CD4-positive, alpha-beta T cell (primary cell): ENCODE measurements at regions of chr9 and their contacts with region 1.

Region 1: DNA sequence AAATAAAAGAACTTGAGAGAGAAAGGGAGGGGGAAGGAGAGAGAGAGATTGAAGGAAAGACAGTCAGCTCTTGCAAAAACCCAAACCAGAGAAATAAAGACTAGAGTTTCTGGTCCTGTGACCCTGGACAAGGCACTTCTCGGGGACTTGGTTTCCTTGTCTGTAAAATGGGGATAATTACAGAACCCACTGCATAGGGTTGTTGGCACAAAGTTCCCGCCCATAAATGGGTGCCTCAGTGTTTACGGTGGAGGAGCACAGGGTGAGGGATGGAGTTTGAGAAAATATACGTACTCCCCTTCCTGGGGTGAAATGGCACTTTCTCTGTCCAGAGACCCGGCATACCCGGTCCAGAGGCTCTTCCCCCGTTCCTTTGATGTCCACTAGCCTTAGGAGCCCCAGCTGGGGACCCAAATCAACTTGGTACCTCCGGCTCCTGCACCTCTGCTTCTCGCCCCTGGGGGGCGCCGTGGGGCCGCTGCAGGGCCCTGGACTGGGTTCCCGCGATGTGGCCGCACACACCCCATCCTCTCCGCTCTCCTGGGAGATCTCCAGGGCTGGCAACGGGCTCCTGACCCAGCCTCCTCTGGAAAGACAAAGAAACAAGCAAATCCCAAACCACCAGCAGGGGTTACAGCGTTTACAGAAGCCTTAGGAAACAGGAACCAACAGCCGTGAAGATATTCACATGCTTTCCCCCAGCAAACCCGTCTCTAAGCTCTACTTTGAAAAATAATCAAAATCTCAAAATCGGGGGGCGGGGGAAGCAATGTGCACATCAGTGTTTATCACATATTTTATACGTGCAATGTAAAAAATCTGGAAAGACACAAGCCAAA is 26.3 kb downstream of the PTGES start:
- DNase-seq: peak; percentile 31 to 77 (median 48)
- ATAC-seq: peak; percentile 94
- H3K4me3 ChIP-seq: no peak overlapping the region
- H3K4me3 Mint-ChIP-seq: no peak overlapping the region
- H3K27ac ChIP-seq: no peak overlapping the region
- H3K27ac Mint-ChIP-seq: no peak overlapping the region
- H3K4me1 ChIP-seq: peaks cover 7% of the 10 kb centered on the region
- H3K4me1 Mint-ChIP-seq: peaks cover 4% of the 10 kb centered on the region
- H3K27me3 ChIP-seq: peaks cover 0 to 7% of the 10 kb centered on the region in 2 experiments
- H3K27me3 Mint-ChIP-seq: peaks cover 8% of the 10 kb centered on the region
- CTCF ChIP-seq: peak; percentile 76

Region 2: DNA sequence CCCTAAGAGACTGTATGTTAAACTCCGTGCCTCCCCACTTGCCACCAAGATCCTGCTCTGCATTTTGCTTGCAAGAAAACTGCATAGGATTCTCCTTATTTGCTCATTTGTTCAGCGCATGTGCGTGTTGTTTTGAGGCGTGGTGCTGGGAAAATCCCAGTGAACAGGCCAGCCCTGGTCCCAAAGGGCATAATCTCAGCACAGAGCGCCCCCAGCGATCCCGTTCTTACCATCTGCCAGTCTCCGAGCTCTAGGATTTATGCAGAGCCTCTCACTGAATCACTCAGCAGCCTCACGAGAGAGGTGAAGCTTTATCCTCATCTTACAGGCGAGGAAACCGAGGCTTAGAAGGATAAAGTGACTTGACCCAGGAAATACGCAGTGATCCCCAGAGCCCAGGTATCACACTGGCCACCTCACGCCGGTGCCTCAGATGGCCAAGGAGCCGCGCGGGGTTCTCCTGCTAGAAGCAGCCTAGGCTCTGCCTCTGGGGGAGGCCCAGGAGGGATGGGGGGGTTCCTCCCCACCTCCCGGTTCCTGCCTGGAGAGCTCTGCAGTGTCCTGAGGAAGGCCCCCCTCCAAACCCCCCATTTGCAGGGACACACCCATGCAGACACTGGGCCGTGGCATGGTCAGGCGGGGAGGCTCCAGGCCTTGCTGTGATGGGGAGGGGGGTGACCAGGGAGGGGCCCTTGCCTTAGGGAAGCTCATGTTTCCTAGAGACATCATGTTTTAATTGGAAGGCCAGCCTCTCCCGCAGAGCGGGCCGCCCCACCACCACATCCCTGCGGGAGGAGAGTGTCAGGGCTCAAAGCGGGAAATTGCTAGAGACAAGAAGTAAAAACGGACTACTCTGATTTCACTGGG is 49.3 kb before region 1 on chr9:
- CTCF ChIA-PET with region 1: no interaction called
- POLR2A ChIA-PET with region 1: no interaction called
- intact Hi-C with region 1: no loop called
- DNase-seq: no peak
- ATAC-seq: no peak
- H3K4me3 ChIP-seq: no peak overlapping the region
- H3K4me3 Mint-ChIP-seq: no peak overlapping the region
- H3K27ac ChIP-seq: no peak overlapping the region
- H3K27ac Mint-ChIP-seq: no peak overlapping the region
- H3K4me1 ChIP-seq: no peaks in the 10 kb centered on the region
- H3K4me1 Mint-ChIP-seq: no peaks in the 10 kb centered on the region
- H3K27me3 ChIP-seq: peaks cover 0 to 10% of the 10 kb centered on the region in 2 experiments
- H3K27me3 Mint-ChIP-seq: peaks cover 24% of the 10 kb centered on the region
- CTCF ChIP-seq: no peak

Region 3: DNA sequence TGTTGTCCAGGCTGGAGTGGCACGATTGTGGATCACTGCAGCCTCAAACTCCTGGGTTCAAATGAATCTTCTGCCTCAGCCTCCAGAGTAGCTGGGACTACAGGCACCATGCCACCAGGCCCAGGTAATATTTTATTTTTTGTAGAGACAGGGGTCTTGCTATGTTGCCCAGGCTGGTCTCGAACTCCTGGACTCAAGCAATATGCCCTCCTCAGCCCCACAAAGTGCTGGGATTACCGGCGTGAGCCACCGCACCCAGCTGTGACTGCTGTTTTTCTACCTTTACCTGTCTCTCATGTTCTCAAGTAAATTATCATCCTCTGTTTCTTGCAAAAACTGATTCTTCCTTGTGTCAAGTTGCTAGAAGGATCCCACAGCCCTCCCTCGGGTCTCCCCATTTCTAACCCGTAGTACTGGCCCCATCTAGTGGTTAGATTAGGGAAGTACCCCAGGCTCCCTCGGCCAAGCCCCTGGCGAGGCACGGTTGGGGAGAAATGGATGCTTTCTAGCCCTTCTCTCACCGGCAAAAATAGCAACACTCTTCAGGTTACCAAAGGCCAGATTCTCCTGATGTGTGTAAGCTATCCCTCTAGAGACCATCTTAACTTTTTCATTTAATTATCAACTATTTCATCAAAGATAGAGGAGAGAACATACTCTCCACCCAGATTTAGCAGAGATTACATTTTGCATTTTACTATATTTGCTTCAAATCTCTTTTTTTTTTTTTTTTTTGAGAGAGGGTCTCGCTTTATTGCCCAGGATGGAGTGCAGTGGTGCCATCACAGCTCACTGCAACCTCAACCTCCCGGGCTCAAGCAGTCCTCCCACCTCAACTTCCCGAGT is 57.2 kb after region 1 on chr9:
- CTCF ChIA-PET with region 1: interaction called, 4 read pairs
- POLR2A ChIA-PET with region 1: no interaction called
- intact Hi-C with region 1: loop called in 1 of 2 experiments (anchors 1 kb)
- DNase-seq: peak; percentile 55 to 84 (median 68)
- ATAC-seq: peak; percentile 100
- H3K4me3 ChIP-seq: no peak overlapping the region
- H3K4me3 Mint-ChIP-seq: no peak overlapping the region
- H3K27ac ChIP-seq: no peak overlapping the region
- H3K27ac Mint-ChIP-seq: no peak overlapping the region
- H3K4me1 ChIP-seq: peaks cover 5% of the 10 kb centered on the region
- H3K4me1 Mint-ChIP-seq: peaks cover 5% of the 10 kb centered on the region
- H3K27me3 ChIP-seq: peaks cover 0 to 2% of the 10 kb centered on the region in 2 experiments
- H3K27me3 Mint-ChIP-seq: peaks cover 8% of the 10 kb centered on the region
- CTCF ChIP-seq: peak; percentile 89